Cardiac septum (tissue), 1 donor: ENCODE measurements at regions of chr12 and their contacts with region 1.

Region 1: GRCh38 chr12:56266693-56267442 is at the start of gene COQ10A:
- DNase-seq: peak; percentile 95
- total RNA-seq, gene COQ10A: 86.8 TPM

Region 2: DNA sequence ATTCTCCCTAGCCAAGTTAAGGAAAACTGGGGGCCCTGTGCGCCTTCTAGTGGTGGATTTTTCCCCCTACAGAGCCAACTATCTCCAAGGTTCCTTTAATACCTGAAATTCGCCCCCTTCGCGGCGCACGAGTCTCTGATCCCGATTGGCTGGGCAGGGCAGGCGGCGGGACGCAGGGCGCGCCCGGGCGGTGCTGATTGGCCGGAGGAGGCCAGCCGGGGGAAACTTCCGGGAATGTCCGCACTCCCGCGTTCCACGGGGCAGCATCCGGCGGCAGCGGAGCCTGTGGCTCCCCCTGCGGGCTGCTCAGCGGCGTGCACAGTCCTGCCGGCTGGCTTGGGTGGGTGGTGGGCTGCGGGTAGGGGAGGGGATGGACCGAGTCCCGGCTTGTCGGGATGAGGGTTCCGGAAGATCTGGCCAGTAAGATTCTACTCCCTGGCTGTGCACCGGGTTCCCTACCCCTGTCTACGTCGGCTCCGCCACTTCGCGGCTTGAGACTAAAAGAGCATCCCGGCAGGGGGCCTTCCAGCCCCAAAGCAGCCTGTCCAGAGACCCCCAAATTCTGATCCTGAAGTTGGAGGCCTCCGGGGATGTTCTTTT is 42.7 kb before region 1 on chr12 and contains the start of gene NABP2:
- intact Hi-C with region 1: loop called (anchors 2 kb)
- DNase-seq: peak; percentile 99
- total RNA-seq, gene NABP2: 19.6 TPM

Region 3: GRCh38 chr12:56299853-56300643 is 33.2 kb after region 1 on chr12 and contains the start of gene CS:
- intact Hi-C with region 1: loop called (anchors 2 kb)
- DNase-seq: peak; percentile 100
- total RNA-seq, gene CS: 570 TPM

Region 4: DNA sequence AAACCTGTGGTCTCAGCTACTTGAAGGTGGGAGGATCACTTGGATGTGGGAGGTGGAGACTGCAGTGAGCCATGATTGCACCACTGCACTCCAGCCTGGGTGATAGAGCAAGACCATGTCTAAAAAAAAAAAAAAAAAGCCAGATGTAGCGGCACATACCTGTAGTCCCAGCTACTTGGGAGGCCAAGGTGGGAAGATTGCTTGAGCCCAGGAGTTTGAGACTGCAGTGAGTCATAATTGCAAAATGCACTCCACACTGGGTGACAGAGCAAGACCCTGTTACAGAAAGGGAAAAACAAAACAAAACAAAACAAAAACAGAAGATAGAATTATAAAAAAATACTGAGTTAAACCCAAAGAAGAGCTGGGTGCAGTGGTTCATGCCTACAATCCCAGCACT is 124.9 kb after region 1 on chr12:
- intact Hi-C with region 1: no loop called
- DNase-seq: no peak